ENCODE measurements at regions of chr10 and their contacts with region 1.

Region 1: GRCh38 chr10:16378496-16378895 is 58.3 kb upstream of the PTER start:
- DNase-seq: no peak
- ATAC-seq: no peak
- H3K4me3 ChIP-seq: no peak overlapping the region
- H3K27ac ChIP-seq: no peak overlapping the region
- H3K4me1 ChIP-seq: no peaks in the 10 kb centered on the region
- H3K27me3 ChIP-seq: peaks cover 0 to 22% (median 0%) of the 10 kb centered on the region in 7 donors
- CTCF ChIP-seq: no peak

Region 2: GRCh38 chr10:16141499-16141898 is 237.0 kb before region 1 on chr10:
- intact Hi-C with region 1: no loop called
- DNase-seq: no peak
- ATAC-seq: no peak
- H3K4me3 ChIP-seq: no peak overlapping the region
- H3K27ac ChIP-seq: no peak overlapping the region
- H3K4me1 ChIP-seq: no peaks in the 10 kb centered on the region
- H3K27me3 ChIP-seq: no peaks in the 10 kb centered on the region
- CTCF ChIP-seq: no peak

Region 3: GRCh38 chr10:16280595-16280994 is 97.9 kb before region 1 on chr10:
- intact Hi-C with region 1: no loop called
- DNase-seq: no peak
- ATAC-seq: peak in 1 of 8 donors; percentile 42
- H3K4me3 ChIP-seq: no peak overlapping the region
- H3K27ac ChIP-seq: no peak overlapping the region
- H3K4me1 ChIP-seq: no peaks in the 10 kb centered on the region
- H3K27me3 ChIP-seq: no peaks in the 10 kb centered on the region
- CTCF ChIP-seq: no peak

Region 4: DNA sequence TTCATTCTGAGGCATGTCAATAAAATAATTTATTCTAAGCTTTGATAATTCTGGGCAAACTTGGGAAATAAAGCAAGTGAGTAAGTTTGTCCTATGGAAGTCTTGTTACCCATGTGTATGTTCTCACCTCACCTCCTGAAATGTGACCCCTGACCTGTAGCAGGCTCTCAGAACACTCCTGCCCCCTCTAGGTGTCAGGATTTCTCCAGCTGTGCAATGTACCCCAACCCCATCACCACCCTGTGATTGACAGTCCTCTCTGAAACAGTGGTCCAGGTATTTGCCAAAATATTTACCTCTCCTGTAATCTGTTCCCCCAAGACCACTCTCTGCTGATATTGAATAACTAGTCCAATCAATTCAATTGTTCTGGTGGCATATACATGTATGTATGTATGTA is 64.2 kb before region 1 on chr10:
- intact Hi-C with region 1: no loop called
- DNase-seq: no peak
- ATAC-seq: no peak
- H3K4me3 ChIP-seq: no peak overlapping the region
- H3K27ac ChIP-seq: no peak overlapping the region
- H3K4me1 ChIP-seq: no peaks in the 10 kb centered on the region
- H3K27me3 ChIP-seq: no peaks in the 10 kb centered on the region
- CTCF ChIP-seq: peak in 1 of 9 donors; percentile 9

Region 5: DNA sequence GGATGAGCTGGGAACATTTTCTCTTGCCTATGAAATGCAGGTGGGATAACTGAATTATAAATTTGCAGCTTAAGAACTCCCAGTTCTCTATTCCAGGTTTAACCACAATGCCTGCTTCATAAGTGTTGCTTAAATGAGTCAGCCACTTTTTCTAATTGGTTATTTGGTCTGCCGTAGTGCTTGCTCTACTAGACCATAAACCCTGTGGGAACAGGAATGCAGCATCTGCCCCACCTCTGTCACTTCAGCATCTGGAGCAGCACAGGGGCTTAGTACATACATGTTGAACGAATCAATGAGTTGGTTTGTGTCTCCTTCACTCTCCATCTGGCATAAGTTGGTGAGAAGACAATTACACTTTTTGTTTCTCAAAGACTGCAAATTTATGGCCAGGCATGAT is 36.9 kb before region 1 on chr10:
- intact Hi-C with region 1: no loop called
- DNase-seq: no peak
- ATAC-seq: no peak
- H3K4me3 ChIP-seq: no peak overlapping the region
- H3K27ac ChIP-seq: no peak overlapping the region
- H3K4me1 ChIP-seq: no peaks in the 10 kb centered on the region
- H3K27me3 ChIP-seq: peaks cover 0 to 4% (median 0%) of the 10 kb centered on the region in 7 donors
- CTCF ChIP-seq: no peak

Region 6: DNA sequence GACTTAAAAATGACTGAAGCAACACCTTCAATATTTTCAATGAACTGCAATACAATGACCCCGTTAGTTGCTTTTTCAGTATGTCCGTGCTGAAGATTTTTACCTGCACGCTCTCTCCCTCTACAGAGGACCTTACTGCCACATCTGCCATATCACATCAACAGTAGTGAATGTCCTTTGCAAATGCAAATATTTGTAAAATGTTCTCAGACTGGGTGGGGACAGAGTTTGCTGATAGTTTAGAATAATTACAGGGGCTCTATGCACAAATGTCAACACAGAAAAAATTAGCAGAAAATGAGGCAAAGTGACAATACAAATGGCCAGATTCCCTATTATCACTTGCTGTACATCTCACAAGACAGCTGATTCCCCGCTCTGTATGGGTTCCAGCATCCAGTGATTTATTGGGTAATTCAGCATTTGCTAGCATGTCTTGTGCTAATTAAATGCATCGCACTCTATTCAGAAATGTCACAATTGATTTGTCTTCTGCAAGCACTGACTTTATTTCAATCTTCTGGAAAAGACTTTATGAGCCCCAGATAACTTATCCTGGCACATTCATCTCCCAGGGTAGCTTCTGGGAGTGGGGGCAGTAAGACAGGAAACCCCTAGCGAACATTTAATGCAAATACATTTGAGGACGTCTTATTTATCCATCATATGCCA is 10.7 kb before region 1 on chr10:
- intact Hi-C with region 1: loop called in 1 of 10 experiments (anchors 1 kb)
- DNase-seq: no peak
- ATAC-seq: no peak
- H3K4me3 ChIP-seq: no peak overlapping the region
- H3K27ac ChIP-seq: no peak overlapping the region
- H3K4me1 ChIP-seq: no peaks in the 10 kb centered on the region
- H3K27me3 ChIP-seq: peaks cover 0 to 39% (median 3%) of the 10 kb centered on the region in 7 donors
- CTCF ChIP-seq: no peak